ENCODE measurements at regions of chr12 and their contacts with region 1.

Region 1: GRCh38 chr12:27424631-27425230 is 21.8 kb upstream of the SMCO2 start:
- DNase-seq: peak; percentile 66
- ATAC-seq: peak; percentile 93
- H3K4me3 ChIP-seq: no peak overlapping the region
- H3K27ac ChIP-seq: no peak overlapping the region
- H3K4me1 ChIP-seq: no peaks in the 10 kb centered on the region
- H3K27me3 ChIP-seq: no peaks in the 10 kb centered on the region
- CTCF ChIP-seq: peak; percentile 88

Region 2: GRCh38 chr12:27277846-27278260 is 146.9 kb before region 1 on chr12:
- CTCF ChIA-PET with region 1: no interaction called
- POLR2A ChIA-PET with region 1: no interaction called
- intact Hi-C with region 1: no loop called
- DNase-seq: peak; percentile 83
- ATAC-seq: peak; percentile 74
- H3K4me3 ChIP-seq: no peak overlapping the region
- H3K27ac ChIP-seq: peak overlapping the region; percentile 21; the same call in 1 of the 2 replicates
- H3K4me1 ChIP-seq: peaks cover 15% of the 10 kb centered on the region
- H3K27me3 ChIP-seq: no peaks in the 10 kb centered on the region
- CTCF ChIP-seq: no peak

Region 3: GRCh38 chr12:27468241-27468640 is 43.5 kb after region 1 on chr12:
- CTCF ChIA-PET with region 1: no interaction called
- POLR2A ChIA-PET with region 1: no interaction called
- intact Hi-C with region 1: no loop called
- DNase-seq: no peak
- ATAC-seq: no peak
- H3K4me3 ChIP-seq: no peak overlapping the region
- H3K27ac ChIP-seq: no peak overlapping the region
- H3K4me1 ChIP-seq: no peaks in the 10 kb centered on the region
- H3K27me3 ChIP-seq: no peaks in the 10 kb centered on the region
- CTCF ChIP-seq: no peak

Region 4: GRCh38 chr12:27566159-27566558 is 141.4 kb after region 1 on chr12:
- CTCF ChIA-PET with region 1: no interaction called
- POLR2A ChIA-PET with region 1: no interaction called
- intact Hi-C with region 1: loop called (anchors 1 kb)
- DNase-seq: peak; percentile 27
- ATAC-seq: peak; percentile 41
- H3K4me3 ChIP-seq: no peak overlapping the region
- H3K27ac ChIP-seq: no peak overlapping the region
- H3K4me1 ChIP-seq: peaks cover 13% of the 10 kb centered on the region
- H3K27me3 ChIP-seq: no peaks in the 10 kb centered on the region
- CTCF ChIP-seq: peak; percentile 51

Region 5: DNA sequence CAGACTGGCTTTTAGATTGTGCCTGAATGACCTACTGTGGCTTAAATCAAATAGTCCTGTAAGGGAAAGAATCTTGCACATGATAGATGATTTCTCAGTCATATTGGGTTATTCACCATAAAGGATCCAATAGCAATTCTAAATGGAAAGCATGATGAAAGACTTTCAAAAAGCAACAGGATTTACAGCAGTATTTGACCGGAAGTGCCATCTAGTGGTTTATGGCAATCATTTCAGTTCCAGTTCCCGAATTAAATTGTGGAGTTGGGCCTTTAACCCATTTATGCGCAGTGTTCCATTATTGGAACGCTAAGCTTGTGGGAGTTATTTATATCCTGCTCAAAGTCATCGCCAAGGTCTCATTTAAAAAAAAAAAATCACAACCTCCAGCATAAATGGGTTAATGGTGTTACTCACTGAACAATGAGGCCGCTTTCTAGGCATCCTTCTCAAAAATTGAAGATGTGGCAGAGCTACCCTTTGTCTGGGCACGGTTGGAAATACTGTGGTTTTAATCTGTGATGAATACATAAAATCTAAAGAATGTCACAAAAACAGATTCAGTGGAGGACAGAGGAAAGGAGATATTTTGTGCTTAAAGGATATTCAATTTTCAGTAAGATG is 210.7 kb after region 1 on chr12:
- CTCF ChIA-PET with region 1: no interaction called
- POLR2A ChIA-PET with region 1: no interaction called
- intact Hi-C with region 1: loop called (anchors 1 kb)
- DNase-seq: peak; percentile 80
- ATAC-seq: peak; percentile 60
- H3K4me3 ChIP-seq: no peak overlapping the region
- H3K27ac ChIP-seq: 0 out of 2 replicates have a peak overlapping the region, but pooled peaks have one; percentile 5
- H3K4me1 ChIP-seq: 0 out of 2 replicates have a peak, but pooled peaks cover 2% of the 10 kb centered on the region
- H3K27me3 ChIP-seq: no peaks in the 10 kb centered on the region
- CTCF ChIP-seq: peak; percentile 84

Region 6: GRCh38 chr12:27703710-27704452 is 279.1 kb after region 1 on chr12:
- CTCF ChIA-PET with region 1: no interaction called
- POLR2A ChIA-PET with region 1: no interaction called
- intact Hi-C with region 1: loop called (anchors 1 kb)
- DNase-seq: peak; percentile 98
- ATAC-seq: peak; percentile 99
- H3K4me3 ChIP-seq: no peak overlapping the region
- H3K27ac ChIP-seq: no peak overlapping the region
- H3K4me1 ChIP-seq: no peaks in the 10 kb centered on the region
- H3K27me3 ChIP-seq: no peaks in the 10 kb centered on the region
- CTCF ChIP-seq: peak; percentile 99; the same call in 1 of the 2 replicates